Activated T-helper 1 cell treated with anti-CD3 and anti-CD28 coated beads, Interleukin-12 subunit alpha, Interleukin-12 subunit beta, Interleukin-2, Interleukin-4 antibody, amounts not matched to agents 30 ng/mL and 10 ng/mL and 1 ng/mL, durations not matched to agents 14 hours and 24 hours and 36 hours (primary cell): ENCODE measurements at regions of chr1 and their contacts with region 1.

Region 1: GRCh38 chr1:234656856-234657654 is 47.1 kb upstream of the IRF2BP2 start:
- DNase-seq: no peak
- H3K4me3 Mint-ChIP-seq: no peak overlapping the region
- H3K27ac Mint-ChIP-seq: no peak overlapping the region
- H3K4me1 Mint-ChIP-seq: peaks cover 15% of the 10 kb centered on the region
- H3K27me3 Mint-ChIP-seq: no peaks in the 10 kb centered on the region

Region 2: GRCh38 chr1:234617131-234617985 is 39.7 kb before region 1 on chr1:
- intact Hi-C with region 1: loop called (anchors 5 kb)
- DNase-seq: no peak
- H3K4me3 Mint-ChIP-seq: no peak overlapping the region
- H3K27ac Mint-ChIP-seq: no peak overlapping the region
- H3K4me1 Mint-ChIP-seq: peaks cover 36% of the 10 kb centered on the region
- H3K27me3 Mint-ChIP-seq: no peaks in the 10 kb centered on the region

Region 3: DNA sequence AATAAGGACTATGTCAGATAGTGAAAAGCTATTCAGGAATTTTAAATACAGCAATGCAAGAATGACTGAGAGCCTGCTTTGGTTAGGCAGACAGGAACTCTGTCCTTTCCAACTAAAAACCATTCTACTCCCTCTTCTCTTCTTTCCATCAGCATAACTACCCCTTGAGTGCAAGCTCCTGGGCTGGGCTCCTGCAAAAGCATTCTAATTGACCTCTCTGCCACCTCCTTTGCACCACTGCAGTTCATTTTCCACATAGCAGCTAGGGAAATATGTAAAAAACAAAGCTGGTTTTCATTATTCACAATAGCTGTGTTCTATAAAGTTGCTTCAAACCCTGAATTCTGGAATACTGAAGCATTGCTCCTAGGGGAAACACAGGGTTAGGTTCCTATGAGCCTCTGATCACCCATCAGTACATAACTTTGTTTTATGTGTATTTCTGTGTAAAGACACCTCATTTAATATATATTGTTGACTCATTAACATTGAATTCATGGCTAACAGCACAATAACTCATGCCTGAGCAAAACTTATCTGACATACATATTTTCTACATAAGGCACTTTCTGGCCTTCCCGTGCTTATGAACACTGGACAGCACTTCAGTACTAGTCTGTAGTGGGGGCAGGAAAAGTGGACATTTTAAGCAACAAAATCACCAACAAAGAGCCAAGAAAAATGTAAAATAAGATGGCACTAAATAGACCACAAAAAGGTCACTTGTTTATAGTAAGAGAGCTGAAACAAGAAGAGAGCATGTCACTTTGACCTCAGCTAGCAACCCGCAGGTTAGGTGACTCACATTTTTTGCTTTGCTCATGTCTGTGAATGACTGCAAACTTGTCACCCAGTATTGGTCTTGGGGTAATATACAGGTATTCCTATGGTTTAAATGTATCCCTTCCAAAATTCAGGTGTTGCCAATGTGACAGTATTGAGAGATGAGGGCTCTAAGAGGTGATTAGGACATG is 10.8 kb after region 1 on chr1:
- intact Hi-C with region 1: loop called (anchors 1 kb)
- DNase-seq: no peak
- H3K4me3 Mint-ChIP-seq: no peak overlapping the region
- H3K27ac Mint-ChIP-seq: no peak overlapping the region
- H3K4me1 Mint-ChIP-seq: peaks cover 11% of the 10 kb centered on the region
- H3K27me3 Mint-ChIP-seq: no peaks in the 10 kb centered on the region